ENCODE measurements at regions of chr14 and their contacts with region 1.

Region 1: GRCh38 chr14:24108336-24108874 is 6.2 kb upstream of the DCAF11 start:
- DNase-seq: no peak
- H3K4me3 ChIP-seq: no peak overlapping the region
- H3K27ac ChIP-seq: peak overlapping the region; percentile 13
- H3K4me1 ChIP-seq: no peaks in the 10 kb centered on the region
- H3K27me3 ChIP-seq: no peaks in the 10 kb centered on the region
- CTCF ChIP-seq: no peak

Region 2: DNA sequence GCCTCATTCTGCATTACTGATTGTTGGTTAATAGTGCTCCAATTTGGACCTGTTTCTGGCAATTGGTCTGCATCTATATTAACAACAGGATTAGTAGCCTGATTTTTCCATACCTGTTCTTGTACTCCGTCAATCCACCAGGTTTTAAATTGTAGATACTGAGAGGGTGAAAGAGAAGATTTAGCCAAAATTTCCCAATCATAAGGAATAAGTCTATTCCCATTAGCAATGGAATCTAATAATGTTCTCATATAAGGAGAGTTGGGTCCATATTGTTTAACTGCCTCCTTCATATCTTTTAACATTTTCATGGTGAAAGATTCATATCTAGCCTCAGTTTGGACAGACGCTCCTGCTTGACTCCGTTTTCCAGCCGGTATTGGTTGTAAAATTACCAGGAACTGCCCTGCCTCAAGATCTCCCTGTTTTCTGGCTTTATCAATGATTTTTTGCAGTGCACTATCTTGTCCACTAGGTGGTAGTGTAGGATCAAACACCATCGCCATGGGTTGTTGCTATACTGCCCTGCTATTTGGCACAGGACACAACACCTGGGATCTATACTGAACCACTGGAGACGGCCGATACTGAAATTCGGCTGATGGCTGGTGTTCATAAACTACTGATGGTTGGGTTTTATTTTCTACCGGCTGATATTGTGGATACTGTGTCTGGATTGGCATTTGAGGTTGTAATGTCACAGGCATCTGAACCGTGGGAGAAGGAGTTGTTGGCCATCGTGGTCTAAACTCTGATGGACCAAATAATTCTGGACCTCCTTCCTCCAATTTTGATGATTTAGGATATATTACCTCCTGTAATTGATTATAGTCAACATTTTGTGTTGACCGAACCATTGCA is 94.5 kb before region 1 on chr14:
- intact Hi-C with region 1: loop called (anchors 5 kb)
- DNase-seq: peak; percentile 73
- H3K4me3 ChIP-seq: no peak overlapping the region
- H3K27ac ChIP-seq: no peak overlapping the region
- H3K4me1 ChIP-seq: no peaks in the 10 kb centered on the region
- H3K27me3 ChIP-seq: no peaks in the 10 kb centered on the region
- CTCF ChIP-seq: peak; percentile 90